Breast epithelium (tissue), 4 donors: ENCODE measurements at regions of chr15 and their contacts with region 1.

Region 1: GRCh38 chr15:58086491-58086890 is 21.0 kb upstream of the ALDH1A2 start:
- DNase-seq: no peak
- H3K4me3 ChIP-seq: no peak overlapping the region
- H3K27ac ChIP-seq: no peak overlapping the region
- H3K4me1 ChIP-seq: no peaks in the 10 kb centered on the region
- H3K27me3 ChIP-seq: no peaks in the 10 kb centered on the region
- CTCF ChIP-seq: no peak
- POLR2A ChIP-seq: no peak

Region 2: DNA sequence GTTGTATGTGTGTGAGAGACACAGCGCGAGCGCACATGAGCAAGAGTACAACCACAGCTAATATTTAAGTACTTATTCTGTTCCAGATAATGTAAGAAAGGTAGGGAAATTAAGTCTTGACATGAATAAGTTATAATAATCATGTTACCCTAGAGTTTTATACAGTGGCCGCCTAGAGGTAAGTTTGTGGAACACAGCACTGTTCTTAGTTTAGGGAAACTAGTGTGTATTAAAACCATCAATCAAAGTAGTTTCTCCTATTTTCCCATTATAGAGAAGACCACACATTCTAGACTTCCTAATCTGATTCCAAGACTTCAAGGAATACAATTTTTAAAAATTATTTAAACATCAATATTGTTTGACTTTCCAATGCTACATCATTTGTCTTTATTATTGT is 30.5 kb before region 1 on chr15:
- intact Hi-C with region 1: no loop called
- DNase-seq: no peak
- H3K4me3 ChIP-seq: no peak overlapping the region
- H3K27ac ChIP-seq: no peak overlapping the region
- H3K4me1 ChIP-seq: no peaks in the 10 kb centered on the region
- H3K27me3 ChIP-seq: peaks cover 0 to 5% of the 10 kb centered on the region in 2 donors
- CTCF ChIP-seq: no peak
- POLR2A ChIP-seq: no peak

Region 3: DNA sequence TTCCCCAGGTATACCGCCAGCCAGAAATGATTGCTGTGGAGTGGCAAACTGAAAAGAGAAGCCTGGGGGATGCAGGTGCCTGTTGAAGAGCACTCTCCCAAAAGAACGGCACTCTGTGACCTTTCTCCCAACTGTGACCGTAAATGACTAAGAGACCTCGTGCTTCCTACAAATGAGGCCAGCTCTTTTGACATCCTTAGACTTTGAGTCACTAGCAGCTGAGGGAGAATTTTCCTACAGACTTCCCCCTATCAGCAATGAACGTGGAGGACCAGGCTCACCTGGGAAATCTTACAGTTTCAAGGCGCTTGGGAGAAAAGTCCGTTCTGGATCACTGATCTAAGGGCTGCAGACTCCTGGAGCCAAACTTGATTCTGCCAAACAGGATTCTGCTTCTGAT is 60.3 kb after region 1 on chr15:
- intact Hi-C with region 1: loop called (anchors 10 kb)
- DNase-seq: no peak
- H3K4me3 ChIP-seq: no peak overlapping the region
- H3K27ac ChIP-seq: no peak overlapping the region
- H3K4me1 ChIP-seq: no peaks in the 10 kb centered on the region
- H3K27me3 ChIP-seq: no peaks in the 10 kb centered on the region
- CTCF ChIP-seq: no peak
- POLR2A ChIP-seq: no peak